ENCODE measurements at regions of chr1 and their contacts with region 1.

Region 1: DNA sequence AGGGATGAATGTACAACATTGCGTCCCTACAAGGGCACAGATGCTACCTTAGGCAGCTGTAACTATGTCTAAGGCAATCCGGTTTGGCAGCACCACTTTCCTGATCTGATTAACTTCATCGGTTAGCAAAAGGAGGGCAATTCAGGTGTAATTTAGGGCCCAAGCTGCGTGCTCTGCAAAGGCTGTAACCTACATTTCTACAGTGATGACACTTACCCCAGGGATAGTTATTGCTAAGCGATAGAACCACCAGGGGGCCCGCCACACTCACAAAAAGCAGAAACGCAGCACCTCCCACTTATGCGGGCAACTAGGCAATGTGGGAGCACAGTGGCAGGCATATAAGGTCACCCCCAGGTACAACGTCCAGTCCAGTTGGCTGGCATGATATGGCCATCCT is 113.5 kb downstream of the GDAP2 start:
- DNase-seq: no peak
- ATAC-seq: peak in 1 of 4 donors; percentile 29
- H3K4me3 ChIP-seq: no peak overlapping the region
- H3K27ac ChIP-seq: no peak overlapping the region
- H3K4me1 ChIP-seq: no peaks in the 10 kb centered on the region
- H3K27me3 ChIP-seq: no peaks in the 10 kb centered on the region
- CTCF ChIP-seq: no peak

Region 2: GRCh38 chr1:117685936-117686806 is 129.8 kb before region 1 on chr1:
- intact Hi-C with region 1: no loop called
- DNase-seq: no peak
- ATAC-seq: peak; percentile 17 to 69 (median 50)
- H3K4me3 ChIP-seq: no peak overlapping the region
- H3K27ac ChIP-seq: no peak overlapping the region
- H3K4me1 ChIP-seq: peaks cover 0 to 5% (median 3%) of the 10 kb centered on the region in 3 donors
- H3K27me3 ChIP-seq: no peaks in the 10 kb centered on the region
- CTCF ChIP-seq: no peak

Region 3: DNA sequence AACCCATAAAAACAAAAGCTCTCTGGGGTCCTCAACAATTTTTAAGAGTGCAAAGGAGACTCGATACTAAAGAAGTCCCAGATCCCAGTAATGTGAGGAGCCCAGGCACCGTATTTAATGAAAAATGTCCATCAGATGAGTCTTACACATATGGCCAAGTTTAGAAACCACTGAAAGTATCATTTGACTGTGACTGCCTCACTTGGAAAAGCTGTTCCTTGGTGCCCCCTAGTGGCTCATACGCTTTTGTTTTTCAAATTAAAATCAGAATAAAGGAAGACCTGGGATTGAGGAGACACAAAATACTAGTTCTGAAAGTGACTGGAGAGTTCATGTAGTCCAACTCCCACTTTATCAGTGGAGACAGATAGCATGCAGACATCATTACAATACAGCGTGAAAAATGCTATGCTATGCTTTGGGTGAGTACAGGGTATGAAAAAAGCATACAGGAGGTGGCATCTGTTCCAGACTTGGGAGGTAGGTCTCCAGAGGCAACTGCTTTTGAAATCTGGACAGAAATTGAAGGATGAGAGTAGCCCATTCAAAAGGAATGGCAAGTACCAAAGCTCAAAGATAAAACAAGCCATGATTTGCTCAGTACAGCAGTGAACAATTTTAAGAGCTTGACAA is 79.7 kb after region 1 on chr1:
- intact Hi-C with region 1: loop called in 1 of 3 experiments (anchors 10 kb)
- DNase-seq: peak in 5 of 6 donors; percentile 48 to 77 (median 58)
- ATAC-seq: peak; percentile 60 to 81 (median 77)
- H3K4me3 ChIP-seq: no peak overlapping the region
- H3K27ac ChIP-seq: peak overlapping the region in 1 of 4 donors; percentile 8
- H3K4me1 ChIP-seq: peaks cover 33 to 50% (median 41%) of the 10 kb centered on the region in 3 donors
- H3K27me3 ChIP-seq: no peaks in the 10 kb centered on the region
- CTCF ChIP-seq: peak in 3 of 4 donors; percentile 50 to 74 (median 72)